HCT116 (cell line): ENCODE measurements at regions of chr11 and their contacts with region 1.

Region 1: DNA sequence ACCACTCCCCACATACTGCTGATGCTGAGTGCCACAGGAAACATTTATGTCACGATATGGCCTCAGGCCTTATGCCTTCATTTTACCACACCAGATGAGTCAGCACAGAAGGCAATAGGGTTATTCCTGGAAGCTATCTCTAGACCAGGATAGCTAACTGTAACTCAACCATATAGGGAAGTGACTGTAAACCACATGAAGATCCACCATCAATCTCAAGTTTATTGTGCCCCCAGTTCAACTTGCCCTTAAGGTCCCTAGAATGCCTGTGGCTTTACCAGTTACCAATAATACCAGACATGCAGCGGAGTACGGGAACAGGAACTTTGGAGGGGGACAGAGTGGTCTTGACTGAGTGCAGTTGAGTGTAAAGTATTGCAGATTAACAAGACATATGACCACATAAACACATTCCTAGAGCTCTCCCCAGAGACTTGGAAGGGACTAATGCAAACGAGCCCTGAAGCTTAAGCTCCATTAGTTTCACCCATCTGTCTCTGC is 180.9 kb downstream of the KIF18A start:
- DNase-seq: no peak
- ATAC-seq: peak; percentile 81
- H3K4me3 ChIP-seq: no peak overlapping the region
- H3K27ac ChIP-seq: peak overlapping the region; percentile 5; the same call in 1 of the 2 replicates
- H3K4me1 ChIP-seq: peaks cover 13 to 32% of the 10 kb centered on the region in 2 experiments; a peak in 3 of 4 replicates
- H3K27me3 ChIP-seq: no peaks in the 10 kb centered on the region
- CTCF ChIP-seq: no peak
- POLR2A ChIP-seq: no peak
- RAD21 ChIP-seq: no peak

Region 2: DNA sequence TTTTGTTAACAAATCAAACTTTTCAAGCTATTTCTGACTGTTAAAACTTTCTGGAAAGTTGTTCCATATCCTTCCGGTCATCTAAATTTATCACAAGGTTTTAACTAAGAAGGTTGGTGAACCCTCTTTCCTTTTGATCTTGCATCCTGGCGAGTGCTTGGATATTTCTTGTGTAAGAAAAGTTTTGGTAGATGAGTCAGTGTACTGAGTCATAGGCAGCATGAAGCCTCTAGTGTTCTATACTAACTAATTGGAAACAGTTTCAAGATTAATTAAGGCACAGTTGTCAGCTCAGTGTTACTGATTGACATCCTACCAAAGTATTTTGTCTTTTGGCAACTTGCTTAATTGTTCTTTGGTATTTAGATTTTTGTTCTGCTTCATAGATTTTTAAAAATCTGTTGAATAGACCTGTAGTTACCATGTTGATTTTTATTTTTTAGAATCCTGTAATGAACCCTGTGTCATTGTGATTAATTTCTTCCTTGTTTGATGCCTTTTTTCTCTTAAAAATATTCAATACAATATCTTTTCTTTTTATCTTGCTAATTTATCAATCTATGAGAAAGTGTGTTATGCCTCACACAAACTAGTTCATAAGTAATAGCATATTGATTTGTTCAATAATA is 219.2 kb after region 1 on chr11:
- CTCF ChIA-PET with region 1: no interaction called
- POLR2A ChIA-PET with region 1: no interaction called
- RAD21 ChIA-PET with region 1: no interaction called
- intact Hi-C with region 1: loop called (anchors 10 kb)
- DNase-seq: peak; percentile 90
- ATAC-seq: peak; percentile 85
- H3K4me3 ChIP-seq: peak overlapping the region in 1 of 2 experiments; percentile 28; a peak in 1 of 4 replicates
- H3K27ac ChIP-seq: peak overlapping the region; percentile 95; the same call in 1 of the 2 replicates
- H3K4me1 ChIP-seq: peaks cover 46 to 54% of the 10 kb centered on the region in 2 experiments
- H3K27me3 ChIP-seq: no peaks in the 10 kb centered on the region
- CTCF ChIP-seq: no peak
- POLR2A ChIP-seq: no peak
- RAD21 ChIP-seq: peak; percentile 25